Sigmoid colon (tissue), 7 donors: ENCODE measurements at regions of chr9 and their contacts with region 1.

Region 1: GRCh38 chr9:2816476-2817141 is 27.3 kb downstream of the PUM3 start:
- DNase-seq: peak; percentile 81
- H3K4me3 ChIP-seq: no peak overlapping the region
- H3K27ac ChIP-seq: peak overlapping the region; percentile 65 to 89 (median 78)
- H3K4me1 ChIP-seq: peaks cover 0 to 32% (median 24%) of the 10 kb centered on the region in 4 donors
- H3K27me3 ChIP-seq: no peaks in the 10 kb centered on the region
- CTCF ChIP-seq: no peak
- EP300 ChIP-seq: peak; percentile 28 to 92 (median 64)
- POLR2A ChIP-seq: no peak

Region 2: GRCh38 chr9:2722715-2723114 is 93.9 kb before region 1 on chr9:
- intact Hi-C with region 1: no loop called
- DNase-seq: no peak
- H3K4me3 ChIP-seq: no peak overlapping the region
- H3K27ac ChIP-seq: no peak overlapping the region
- H3K4me1 ChIP-seq: no peaks in the 10 kb centered on the region
- H3K27me3 ChIP-seq: no peaks in the 10 kb centered on the region
- CTCF ChIP-seq: no peak
- EP300 ChIP-seq: no peak
- POLR2A ChIP-seq: no peak

Region 3: DNA sequence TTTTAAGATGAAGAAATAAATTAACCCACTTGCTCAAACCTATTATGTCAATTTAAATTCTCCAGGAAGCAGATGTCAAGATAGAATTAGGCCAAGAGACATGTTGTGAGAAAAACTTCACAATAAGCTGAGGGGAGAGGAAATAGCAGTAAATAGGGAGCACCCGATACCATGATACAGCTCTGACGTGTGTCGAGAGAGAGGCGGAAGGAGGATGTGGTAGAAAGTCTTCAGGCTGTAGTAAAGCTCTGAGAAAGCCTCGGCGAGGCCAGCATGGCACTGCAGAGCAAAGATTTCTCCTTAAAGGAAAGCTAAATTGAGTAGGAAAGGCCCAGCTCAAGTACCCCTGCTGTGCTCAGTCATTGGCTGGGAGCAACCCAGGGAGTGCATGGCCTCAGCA is 33.3 kb after region 1 on chr9:
- intact Hi-C with region 1: loop called (anchors 2 kb)
- DNase-seq: no peak
- H3K4me3 ChIP-seq: no peak overlapping the region
- H3K27ac ChIP-seq: no peak overlapping the region
- H3K4me1 ChIP-seq: peaks cover 0 to 11% (median 8%) of the 10 kb centered on the region in 4 donors
- H3K27me3 ChIP-seq: no peaks in the 10 kb centered on the region
- CTCF ChIP-seq: no peak
- EP300 ChIP-seq: no peak
- POLR2A ChIP-seq: no peak

Region 4: DNA sequence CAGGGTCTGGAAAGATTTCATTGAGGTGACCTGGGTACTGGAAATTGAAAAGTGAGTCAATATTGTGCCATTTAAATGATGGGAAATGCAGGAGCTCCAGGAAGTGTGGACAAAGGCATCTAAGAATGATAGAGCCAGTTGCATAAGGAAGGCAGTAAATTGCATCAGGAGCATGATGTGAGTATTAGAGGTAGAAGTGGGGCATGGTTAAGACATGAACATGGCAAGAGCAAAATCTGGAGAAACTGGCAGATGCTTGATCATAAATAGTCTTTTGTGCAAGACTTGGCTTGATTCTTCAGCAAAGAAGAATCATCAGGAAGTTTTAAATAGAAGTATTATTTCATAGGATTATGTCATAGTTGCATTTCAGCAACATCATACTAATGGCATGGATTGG is 184.7 kb after region 1 on chr9:
- intact Hi-C with region 1: no loop called
- DNase-seq: no peak
- H3K4me3 ChIP-seq: no peak overlapping the region
- H3K27ac ChIP-seq: no peak overlapping the region
- H3K4me1 ChIP-seq: peaks cover 0 to under 1% (median 0%) of the 10 kb centered on the region in 4 donors
- H3K27me3 ChIP-seq: no peaks in the 10 kb centered on the region
- CTCF ChIP-seq: no peak
- EP300 ChIP-seq: no peak
- POLR2A ChIP-seq: no peak